Activated naive CD4-positive, alpha-beta T cell treated with anti-CD3 and anti-CD28 coated beads, Interleukin-2, amount 10 ng/mL, durations not matched to agents 7 days and 5 days (primary cell): ENCODE measurements at regions of chr17 and their contacts with region 1.

Region 1: DNA sequence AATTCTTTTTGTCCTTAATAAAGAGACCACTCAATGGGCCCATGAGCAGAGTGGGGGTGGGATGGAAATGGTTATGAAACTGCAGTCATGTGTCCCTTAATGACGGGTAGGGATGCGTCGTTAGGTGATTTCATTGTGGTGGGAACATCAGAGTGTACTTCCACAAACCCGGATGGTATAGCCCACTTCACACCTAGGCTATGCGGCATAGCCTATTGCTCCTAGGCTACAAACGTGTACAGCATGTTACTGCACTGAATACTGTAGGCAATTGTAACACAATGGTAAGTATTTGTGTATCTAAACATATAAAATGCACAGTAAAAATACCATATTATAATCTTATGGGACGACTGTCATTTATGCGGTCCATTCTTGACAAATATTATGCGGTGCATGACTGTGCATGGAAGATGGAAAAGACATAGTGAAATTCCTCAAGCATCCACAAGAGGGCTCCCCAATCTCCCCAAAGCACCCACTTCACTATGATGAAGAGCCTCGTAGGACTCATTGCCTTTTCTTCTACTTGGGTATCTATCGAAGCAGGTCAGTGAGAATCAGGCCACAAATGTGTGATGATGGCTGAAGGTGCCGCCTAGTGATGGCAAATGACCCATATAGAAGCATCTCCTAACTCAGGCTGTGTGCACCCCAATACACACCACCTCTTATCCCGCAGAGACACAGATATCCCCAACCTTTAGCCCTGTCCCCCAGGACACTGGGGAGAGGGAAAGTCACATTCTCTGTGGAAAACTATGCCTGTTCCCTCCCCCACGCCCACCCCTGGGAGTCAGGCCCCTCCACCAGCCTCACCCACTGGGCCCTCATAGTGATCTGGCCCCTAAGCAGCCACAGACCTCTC is 43.5 kb downstream of the TBX21 start:
- DNase-seq: peak; percentile 46
- H3K4me3 Mint-ChIP-seq: no peak overlapping the region
- H3K27ac Mint-ChIP-seq: no peak overlapping the region
- H3K4me1 Mint-ChIP-seq: no peaks in the 10 kb centered on the region
- H3K27me3 Mint-ChIP-seq: peaks cover 80% of the 10 kb centered on the region

Region 2: DNA sequence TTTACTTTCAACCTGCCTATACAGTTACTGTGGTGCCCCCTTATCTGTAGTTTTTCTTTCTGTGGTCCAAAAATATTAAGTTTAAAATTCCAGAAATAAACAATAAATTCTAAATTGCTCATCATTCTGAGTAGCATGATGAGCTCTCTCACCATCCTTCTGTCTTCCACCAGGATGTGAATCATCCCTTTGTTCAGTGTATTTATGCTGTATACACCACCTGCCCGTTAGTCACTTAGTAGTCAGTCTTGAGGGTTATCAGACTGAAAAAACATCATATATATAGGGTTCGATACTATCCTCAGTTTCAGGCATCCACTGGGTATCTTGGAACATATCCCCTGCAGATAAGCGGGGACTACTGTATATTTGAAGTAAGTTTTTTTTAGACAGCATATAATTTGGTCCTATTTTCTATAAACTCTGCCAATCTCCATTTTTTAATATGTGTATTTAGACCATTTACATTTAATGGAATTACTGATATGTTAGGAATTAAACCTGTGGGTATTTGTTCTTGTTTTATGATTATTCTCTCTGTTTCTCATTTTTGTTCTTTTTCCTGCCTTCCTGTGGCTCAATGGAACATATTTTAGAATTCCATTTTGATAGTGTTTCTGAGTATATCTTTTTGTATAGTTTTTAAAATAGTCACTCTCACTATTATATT is 12.5 kb before region 1 on chr17:
- CTCF ChIA-PET with region 1: interaction called, 14 read pairs
- DNase-seq: no peak
- H3K4me3 Mint-ChIP-seq: no peak overlapping the region
- H3K27ac Mint-ChIP-seq: no peak overlapping the region
- H3K4me1 Mint-ChIP-seq: peaks cover 3% of the 10 kb centered on the region
- H3K27me3 Mint-ChIP-seq: peaks cover 44% of the 10 kb centered on the region